ENCODE measurements at regions of chr3 and their contacts with region 1.

Region 1: GRCh38 chr3:186241910-186242821 is 119.9 kb downstream of the DGKG start:
- DNase-seq: peak; percentile 65 to 78 (median 76)
- ATAC-seq: peak; percentile 93
- H3K4me3 ChIP-seq: no peak overlapping the region
- H3K4me1 ChIP-seq: no peaks in the 10 kb centered on the region
- CTCF ChIP-seq: no peak

Region 2: GRCh38 chr3:185983495-185984141 is 258.5 kb before region 1 on chr3:
- intact Hi-C with region 1: loop called (anchors 10 kb)
- DNase-seq: peak in 2 of 3 donors; percentile 66 to 87
- ATAC-seq: peak; percentile 95
- H3K4me3 ChIP-seq: no peak overlapping the region
- H3K4me1 ChIP-seq: no peaks in the 10 kb centered on the region
- CTCF ChIP-seq: peak; percentile 89